ENCODE measurements at regions of chr3 and their contacts with region 1.

Region 1: GRCh38 chr3:47989981-47990440 is 26.2 kb downstream of the MAP4 start:
- DNase-seq: peak; percentile 35 to 89 (median 80)
- H3K4me3 ChIP-seq: no peak overlapping the region
- H3K27ac ChIP-seq: peak overlapping the region in 26 of 59 donors; percentile 14 to 71 (median 30)
- H3K27me3 ChIP-seq: no peaks in the 10 kb centered on the region
- CTCF ChIP-seq: peak; percentile 80 to 98 (median 94)

Region 2: DNA sequence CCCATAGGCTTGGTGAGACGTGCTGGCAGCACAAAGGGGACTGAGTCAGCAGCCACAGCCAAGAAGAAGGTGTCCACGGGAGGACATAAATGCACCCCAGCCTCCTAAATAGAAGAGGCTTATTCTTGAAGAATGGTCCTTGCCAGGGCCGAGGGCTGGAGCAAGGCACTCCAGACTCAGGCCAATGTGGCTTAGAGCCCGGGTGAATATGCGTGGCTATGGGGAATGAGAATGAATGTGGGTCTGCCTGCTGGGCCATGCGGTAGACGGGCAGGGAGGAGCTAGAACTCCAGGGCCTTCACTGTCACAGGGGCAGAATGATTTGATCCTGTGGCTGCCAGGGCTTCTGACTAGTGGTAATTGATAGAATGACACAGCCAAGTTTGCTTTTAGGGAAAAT is 153.0 kb before region 1 on chr3:
- intact Hi-C with region 1: loop called (anchors 1 to 5 kb)
- DNase-seq: peak in 2 of 10 donors; percentile 42 to 65
- H3K4me3 ChIP-seq: no peak overlapping the region
- H3K27ac ChIP-seq: peak overlapping the region in 54 of 59 donors; percentile 10 to 83 (median 65)
- H3K27me3 ChIP-seq: no peaks in the 10 kb centered on the region
- CTCF ChIP-seq: no peak

Region 3: DNA sequence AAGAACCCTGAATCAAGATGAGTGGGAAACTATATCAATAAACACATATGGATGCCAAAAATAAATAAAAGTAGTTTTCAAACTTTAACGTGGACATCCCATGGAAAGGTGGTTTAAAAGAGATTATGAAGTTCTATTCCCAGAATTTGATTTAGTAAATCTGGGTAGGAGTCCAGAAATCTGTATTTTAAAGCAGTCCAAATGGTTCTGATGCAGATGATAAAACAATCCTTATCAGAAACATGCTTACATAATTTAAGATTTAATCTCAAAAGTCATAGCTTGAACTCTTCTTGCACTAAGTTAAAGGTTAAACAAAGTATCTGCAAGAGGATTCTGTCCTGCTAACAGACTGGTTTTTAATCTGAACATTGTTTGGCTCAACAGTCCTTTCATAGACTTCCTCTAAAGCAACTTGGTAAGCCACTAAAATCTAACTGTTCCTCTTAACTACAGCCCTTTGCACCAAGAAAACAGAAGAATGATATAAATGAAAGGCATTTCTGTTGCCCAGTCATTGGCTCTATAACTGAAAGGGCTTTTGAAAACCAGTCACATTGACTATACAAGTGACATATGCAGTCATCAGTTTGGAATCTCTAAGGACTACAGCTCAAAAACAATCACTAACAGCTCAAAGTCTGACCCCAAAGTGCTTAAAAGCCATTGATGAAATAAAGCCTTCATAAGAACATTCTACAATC is 49.6 kb after region 1 on chr3:
- intact Hi-C with region 1: loop called in 1 of 2 experiments (anchors 2 kb)
- DNase-seq: no peak
- H3K4me3 ChIP-seq: peak overlapping the region in 28 of 59 donors; percentile 2 to 43 (median 24)
- H3K27ac ChIP-seq: peak overlapping the region; percentile 54 to 96 (median 86)
- H3K27me3 ChIP-seq: no peaks in the 10 kb centered on the region
- CTCF ChIP-seq: no peak

Region 4: GRCh38 chr3:48088749-48089466 is 98.9 kb after region 1 on chr3:
- intact Hi-C with region 1: loop called (anchors 5 kb)
- DNase-seq: peak; percentile 94 to 98 (median 96)
- H3K4me3 ChIP-seq: peak overlapping the region; percentile 62 to 99 (median 89)
- H3K27ac ChIP-seq: peak overlapping the region; percentile 72 to 99 (median 95)
- H3K27me3 ChIP-seq: no peaks in the 10 kb centered on the region
- CTCF ChIP-seq: peak in 16 of 56 donors; percentile 8 to 40 (median 19)

Region 5: GRCh38 chr3:48151058-48151806 is 161.2 kb after region 1 on chr3:
- intact Hi-C with region 1: loop called (anchors 5 to 10 kb)
- DNase-seq: peak; percentile 54 to 84 (median 76)
- H3K4me3 ChIP-seq: peak overlapping the region in 1 of 59 donors; percentile 5
- H3K27ac ChIP-seq: peak overlapping the region in 38 of 59 donors; percentile 1 to 71 (median 41)
- H3K27me3 ChIP-seq: no peaks in the 10 kb centered on the region
- CTCF ChIP-seq: peak in 55 of 56 donors; percentile 50 to 90 (median 77)